A549 (cell line): ENCODE measurements at regions of chr12 and their contacts with region 1.

Region 1: DNA sequence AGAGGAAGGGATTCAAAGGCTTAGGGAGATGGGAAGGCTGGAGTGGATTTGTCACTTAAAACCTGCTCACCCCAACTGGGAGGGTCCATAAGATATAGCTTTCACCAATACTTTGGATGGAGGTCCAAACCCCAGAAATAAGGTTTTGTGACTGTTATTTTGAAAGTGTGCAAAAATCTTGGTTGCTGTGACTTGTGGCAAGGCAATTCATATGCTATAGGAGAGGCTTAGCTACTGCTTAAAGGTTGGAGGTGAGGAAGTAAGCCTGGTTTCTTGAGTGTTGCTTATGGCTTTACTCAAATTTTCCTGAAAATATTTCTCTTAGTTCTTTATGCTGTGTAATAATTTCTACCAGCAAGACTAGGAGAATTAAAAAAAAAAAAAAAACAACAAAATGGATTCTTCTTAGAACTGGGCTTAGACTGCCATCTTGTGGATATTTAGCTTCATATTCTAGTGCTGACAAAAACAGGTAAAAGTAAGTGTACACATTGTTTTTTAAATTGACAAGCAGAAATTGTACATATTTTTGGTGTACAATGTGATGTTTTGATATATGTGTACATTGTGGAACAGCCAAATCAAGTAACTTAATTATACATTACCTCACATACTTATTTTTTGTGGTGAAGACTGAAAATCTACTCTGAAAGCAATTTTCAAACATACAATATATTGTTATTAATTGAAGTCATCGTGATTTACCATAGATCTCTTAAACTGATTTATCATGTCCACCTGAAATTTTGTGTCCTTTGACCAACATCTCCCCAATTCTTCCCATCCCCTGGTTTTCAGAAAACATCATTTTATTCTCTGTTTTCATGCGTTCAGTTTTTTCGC is 23.0 kb downstream of the PDE6H start:
- DNase-seq: peak; percentile 25 to 81
- ATAC-seq: peak in 1 of 2 experiments; percentile 73; a peak in 4 of 6 replicates
- H3K4me3 ChIP-seq: no peak overlapping the region
- H3K27ac ChIP-seq: no peak overlapping the region
- H3K4me1 ChIP-seq: peaks cover 22% of the 10 kb centered on the region; the same call in 2 of the 3 replicates
- CTCF ChIP-seq: peak; percentile 86
- EP300 ChIP-seq: no peak
- POLR2A ChIP-seq: no peak
- RAD21 ChIP-seq: peak; percentile 91 to 94

Region 2: DNA sequence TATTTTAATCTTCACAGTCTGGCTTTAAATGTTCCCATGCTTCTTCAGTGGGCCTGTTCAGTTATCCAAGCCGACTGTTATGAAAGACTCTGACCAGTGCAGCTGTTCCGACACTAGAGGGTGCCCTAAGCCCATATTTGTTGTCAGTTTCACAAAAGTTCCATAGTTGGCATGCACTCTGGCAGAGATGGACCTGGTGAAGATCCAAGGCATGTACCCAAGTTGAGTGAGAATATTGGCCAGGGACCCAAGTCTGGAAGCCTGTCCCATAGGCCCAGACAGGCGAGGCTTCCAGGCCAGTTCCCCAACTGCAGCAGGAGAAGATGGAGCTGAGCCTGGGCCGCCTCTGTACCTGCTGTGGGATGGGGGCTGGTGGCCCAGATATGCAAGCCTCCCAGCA is 272.0 kb before region 1 on chr12:
- CTCF ChIA-PET with region 1: interaction called, 10 read pairs
- POLR2A ChIA-PET with region 1: no interaction called
- DNase-seq: peak; percentile 12 to 67
- ATAC-seq: peak; percentile 66 to 88; a peak in 4 of 6 replicates
- H3K4me3 ChIP-seq: no peak overlapping the region
- H3K27ac ChIP-seq: no peak overlapping the region
- H3K4me1 ChIP-seq: no peaks in the 10 kb centered on the region
- CTCF ChIP-seq: peak; percentile 49
- EP300 ChIP-seq: no peak
- POLR2A ChIP-seq: no peak
- RAD21 ChIP-seq: peak; percentile 66 to 84

Region 3: GRCh38 chr12:14810953-14811483 is 184.8 kb before region 1 on chr12:
- CTCF ChIA-PET with region 1: interaction called, 61 read pairs
- POLR2A ChIA-PET with region 1: no interaction called
- DNase-seq: peak; percentile 38 to 58
- ATAC-seq: peak; percentile 95 to 97
- H3K4me3 ChIP-seq: no peak overlapping the region
- H3K27ac ChIP-seq: no peak overlapping the region
- H3K4me1 ChIP-seq: peaks cover 14% of the 10 kb centered on the region; the same call in 1 of the 3 replicates
- CTCF ChIP-seq: peak; percentile 89
- EP300 ChIP-seq: no peak
- POLR2A ChIP-seq: no peak
- RAD21 ChIP-seq: peak; percentile 94 to 95

Region 4: GRCh38 chr12:14845350-14845750 is 150.5 kb before region 1 on chr12:
- CTCF ChIA-PET with region 1: interaction called, 37 read pairs
- POLR2A ChIA-PET with region 1: no interaction called
- DNase-seq: peak; percentile 58 to 64
- ATAC-seq: peak; percentile 81 to 83; a peak in 5 of 6 replicates
- H3K4me3 ChIP-seq: no peak overlapping the region
- H3K27ac ChIP-seq: peak overlapping the region in 1 of 2 experiments; percentile 52; a peak in 3 of 6 replicates
- H3K4me1 ChIP-seq: peaks cover 44% of the 10 kb centered on the region
- CTCF ChIP-seq: peak; percentile 73
- EP300 ChIP-seq: no peak
- POLR2A ChIP-seq: no peak
- RAD21 ChIP-seq: peak; percentile 88 to 92

Region 5: DNA sequence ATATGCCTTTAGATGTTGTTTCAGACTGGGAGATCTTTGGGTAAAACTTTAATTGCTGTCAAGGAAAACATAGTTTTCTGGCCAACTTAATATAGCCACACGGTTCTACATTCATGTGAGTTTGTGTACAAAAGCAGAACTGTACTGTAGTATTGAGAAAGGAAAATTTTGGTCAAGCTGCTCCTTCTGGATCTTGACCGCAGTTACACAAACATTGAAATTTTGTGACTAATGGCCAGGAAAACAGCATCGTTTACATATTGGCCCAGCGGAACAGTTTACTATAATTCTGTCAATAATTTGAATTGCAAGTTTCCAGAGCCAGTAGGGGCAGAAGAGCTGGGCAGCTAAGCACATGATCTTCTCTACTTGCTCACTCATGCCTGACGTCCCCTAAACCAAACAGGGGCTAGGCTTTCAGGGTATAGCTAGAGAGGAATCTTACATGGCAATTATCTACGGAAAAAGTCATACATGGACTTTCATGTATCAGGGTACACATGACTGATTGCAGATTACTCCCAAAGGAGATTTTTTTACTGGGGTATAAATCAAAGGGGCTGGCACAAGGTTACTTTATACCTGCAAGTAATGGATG is 141.1 kb before region 1 on chr12:
- CTCF ChIA-PET with region 1: interaction called, 14 read pairs
- POLR2A ChIA-PET with region 1: no interaction called
- DNase-seq: no peak
- ATAC-seq: no peak
- H3K4me3 ChIP-seq: no peak overlapping the region
- H3K27ac ChIP-seq: no peak overlapping the region
- H3K4me1 ChIP-seq: no peaks in the 10 kb centered on the region
- CTCF ChIP-seq: no peak
- EP300 ChIP-seq: no peak
- POLR2A ChIP-seq: no peak
- RAD21 ChIP-seq: no peak

Region 6: DNA sequence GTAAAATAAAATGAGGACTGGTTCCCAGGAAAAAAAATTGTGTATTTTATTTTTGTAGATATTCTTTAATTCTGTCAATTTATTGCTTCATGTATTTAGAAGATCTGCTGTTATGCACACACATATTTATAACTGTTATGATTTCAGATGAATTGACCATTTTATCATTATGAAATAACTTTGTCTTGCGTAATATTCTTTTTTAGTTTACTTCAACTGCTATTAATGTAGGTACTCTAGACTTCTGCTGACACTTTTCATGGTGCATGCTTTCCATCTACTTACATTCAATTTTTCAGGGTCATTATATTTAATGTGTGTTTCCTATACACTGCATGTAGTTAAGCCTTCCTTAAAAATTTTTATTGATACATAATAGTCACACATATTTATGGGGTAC is 63.3 kb after region 1 on chr12:
- CTCF ChIA-PET with region 1: no interaction called
- POLR2A ChIA-PET with region 1: no interaction called
- DNase-seq: no peak
- ATAC-seq: no peak
- H3K4me3 ChIP-seq: no peak overlapping the region
- H3K27ac ChIP-seq: no peak overlapping the region
- H3K4me1 ChIP-seq: no peaks in the 10 kb centered on the region
- CTCF ChIP-seq: no peak
- EP300 ChIP-seq: no peak
- POLR2A ChIP-seq: no peak
- RAD21 ChIP-seq: no peak